A549 (cell line): ENCODE measurements at regions of chr7 and their contacts with region 1.

Region 1: GRCh38 chr7:6516387-6516983 is 34.8 kb downstream of the GRID2IP start:
- DNase-seq: peak; percentile 73 to 88
- ATAC-seq: peak; percentile 89 to 97
- H3K4me3 ChIP-seq: no peak overlapping the region
- H3K27ac ChIP-seq: peak overlapping the region in 1 of 2 experiments; percentile 44; a peak in 1 of 6 replicates
- H3K4me1 ChIP-seq: 0 out of 3 replicates have a peak, but pooled peaks cover 2% of the 10 kb centered on the region
- CTCF ChIP-seq: peak; percentile 91
- EP300 ChIP-seq: no peak
- POLR2A ChIP-seq: no peak
- RAD21 ChIP-seq: peak; percentile 79 to 87

Region 2: DNA sequence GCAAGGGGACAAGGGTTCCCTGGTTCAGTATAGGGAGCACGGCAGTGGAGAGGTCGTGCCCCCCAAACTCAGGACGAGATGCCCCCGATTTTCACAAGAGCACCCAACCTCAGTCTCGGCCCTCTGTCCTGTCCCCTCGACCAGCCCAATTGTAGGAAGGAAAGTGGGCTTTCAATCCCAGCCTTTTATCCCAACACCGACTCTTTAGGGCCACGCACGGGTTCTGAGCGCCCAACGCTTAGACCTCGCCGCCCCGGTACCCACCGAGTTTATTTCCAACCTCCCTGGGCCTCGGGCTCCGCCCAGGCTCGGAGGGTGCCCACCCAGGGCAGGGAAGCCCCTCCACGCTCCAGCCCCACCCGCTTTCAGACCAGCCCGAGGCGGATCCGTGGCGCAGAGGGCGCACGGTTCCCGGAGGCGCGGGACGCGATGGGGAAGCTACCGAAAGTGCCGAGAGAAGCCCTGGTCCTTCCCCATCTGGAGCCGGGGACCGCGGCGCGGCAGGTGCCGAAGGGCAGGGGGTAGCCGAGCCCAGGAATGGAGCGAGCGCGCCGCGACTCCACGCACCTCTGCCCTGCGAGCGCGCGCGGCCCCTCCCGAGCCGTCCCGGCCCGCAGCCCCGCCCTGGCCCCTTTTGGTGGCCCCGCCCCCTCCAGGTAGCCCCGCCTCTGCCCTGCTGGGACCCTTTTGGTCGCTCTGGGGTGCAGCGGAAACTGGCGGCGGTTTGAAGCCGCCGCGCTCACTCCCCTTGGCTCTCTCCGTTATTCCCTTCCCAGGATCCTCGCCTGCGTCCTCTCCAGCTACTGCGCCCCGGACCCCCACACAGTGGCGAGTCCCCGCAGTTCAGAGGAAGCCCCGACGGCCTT is 14.4 kb after region 1 on chr7:
- CTCF ChIA-PET with region 1: interaction called, 19 read pairs
- POLR2A ChIA-PET with region 1: no interaction called
- DNase-seq: no peak
- ATAC-seq: peak; percentile 11 to 40; a peak in 3 of 6 replicates
- H3K4me3 ChIP-seq: peak overlapping the region; percentile 57
- H3K27ac ChIP-seq: peak overlapping the region in 1 of 2 experiments; percentile 67; a peak in 3 of 6 replicates
- H3K4me1 ChIP-seq: no peaks in the 10 kb centered on the region
- CTCF ChIP-seq: no peak
- EP300 ChIP-seq: no peak
- POLR2A ChIP-seq: no peak
- RAD21 ChIP-seq: no peak

Region 3: GRCh38 chr7:6545398-6546126 is 29.1 kb after region 1 on chr7:
- CTCF ChIA-PET with region 1: interaction called, 12 read pairs
- POLR2A ChIA-PET with region 1: no interaction called
- DNase-seq: no peak
- ATAC-seq: no peak
- H3K4me3 ChIP-seq: no peak overlapping the region
- H3K27ac ChIP-seq: no peak overlapping the region
- H3K4me1 ChIP-seq: no peaks in the 10 kb centered on the region
- CTCF ChIP-seq: no peak
- EP300 ChIP-seq: no peak
- POLR2A ChIP-seq: no peak
- RAD21 ChIP-seq: no peak

Region 4: GRCh38 chr7:6571160-6571779 is 54.8 kb after region 1 on chr7:
- CTCF ChIA-PET with region 1: interaction called, 27 read pairs
- POLR2A ChIA-PET with region 1: interaction called, 3 read pairs
- DNase-seq: no peak
- ATAC-seq: peak; percentile 54 to 67; a peak in 5 of 6 replicates
- H3K4me3 ChIP-seq: no peak overlapping the region
- H3K27ac ChIP-seq: no peak overlapping the region
- H3K4me1 ChIP-seq: peaks cover 2% of the 10 kb centered on the region; the same call in 1 of the 3 replicates
- CTCF ChIP-seq: no peak
- EP300 ChIP-seq: no peak
- POLR2A ChIP-seq: no peak
- RAD21 ChIP-seq: no peak

Region 5: DNA sequence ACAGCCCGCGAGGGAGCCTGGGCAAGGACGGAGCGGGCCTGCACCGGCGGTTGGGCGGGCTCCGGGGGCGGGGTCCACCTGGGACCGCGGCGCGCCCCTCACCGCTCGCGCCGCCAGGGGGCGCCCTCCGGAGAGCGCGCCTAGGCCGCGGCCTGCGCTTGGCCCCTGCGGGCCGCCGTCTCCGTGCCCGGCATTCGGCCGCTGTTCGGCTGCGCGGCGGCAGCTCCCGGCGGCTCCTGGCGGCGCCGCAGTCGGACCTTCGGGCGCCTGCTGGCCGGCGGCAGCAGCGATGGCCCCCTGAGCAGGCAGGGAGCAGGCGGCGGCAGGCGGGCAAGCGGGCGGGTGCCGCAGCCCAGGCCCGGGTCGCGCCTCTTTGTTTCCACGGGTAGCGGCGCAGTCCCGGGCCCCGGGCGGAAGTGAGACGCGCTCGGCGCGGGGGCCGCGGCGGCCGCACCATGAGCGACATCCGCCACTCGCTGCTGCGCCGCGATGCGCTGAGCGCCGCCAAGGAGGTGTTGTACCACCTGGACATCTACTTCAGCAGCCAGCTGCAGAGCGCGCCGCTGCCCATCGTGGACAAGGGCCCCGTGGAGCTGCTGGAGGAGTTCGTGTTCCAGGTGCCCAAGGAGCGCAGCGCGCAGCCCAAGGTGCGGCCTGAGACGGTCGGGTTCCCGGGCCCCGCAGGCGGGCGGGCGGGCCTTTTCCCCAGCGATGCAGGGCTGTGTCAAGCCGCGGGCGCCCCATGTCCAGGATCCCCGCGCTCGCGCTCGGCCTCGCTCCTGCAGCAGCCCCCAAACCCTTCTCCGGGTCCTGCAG is 73.6 kb after region 1 on chr7 and contains the start of gene INTS15:
- CTCF ChIA-PET with region 1: interaction called, 22 read pairs
- POLR2A ChIA-PET with region 1: no interaction called
- DNase-seq: peak; percentile 65 to 82
- ATAC-seq: peak; percentile 90 to 92
- H3K4me3 ChIP-seq: peak within 1 kb of the TSS; percentile 77
- H3K27ac ChIP-seq: peak within 1 kb of the TSS; percentile 89 to 92
- H3K4me1 ChIP-seq: peaks cover 11% of the 10 kb centered on the region
- CTCF ChIP-seq: peak; percentile 93
- EP300 ChIP-seq: no peak
- POLR2A ChIP-seq: peak; percentile 75
- RAD21 ChIP-seq: no peak; a peak in 2 of 5 replicates
- polyA plus RNA-seq, gene INTS15: 23.4 and 26.1 TPM in 2 replicates